Naive thymus-derived CD4-positive, alpha-beta T cell (primary cell): ENCODE measurements at regions of chr4 and their contacts with region 1.

Region 1: GRCh38 chr4:118278473-118279274 is 74.1 kb downstream of the PRSS12 start:
- DNase-seq: peak; percentile 91 to 99 (median 95)
- ATAC-seq: peak; percentile 98
- H3K4me3 ChIP-seq: peak overlapping the region; percentile 80
- H3K4me3 Mint-ChIP-seq: peak overlapping the region; percentile 91 to 98 (median 94)
- H3K27ac ChIP-seq: peak overlapping the region; percentile 94
- H3K27ac Mint-ChIP-seq: peak overlapping the region; percentile 93 to 99 (median 98)
- H3K4me1 ChIP-seq: peaks cover 16 to 20% of the 10 kb centered on the region in 2 donors
- H3K4me1 Mint-ChIP-seq: peaks cover 24 to 58% (median 48%) of the 10 kb centered on the region in 7 donors
- H3K27me3 ChIP-seq: no peaks in the 10 kb centered on the region
- H3K27me3 Mint-ChIP-seq: no peaks in the 10 kb centered on the region

Region 2: GRCh38 chr4:118173956-118174725 is 104.5 kb before region 1 on chr4:
- CTCF ChIA-PET with region 1: no interaction called
- POLR2A ChIA-PET with region 1: no interaction called
- intact Hi-C with region 1: loop called in 1 of 2 experiments (anchors 5 kb)
- DNase-seq: peak in 4 of 9 donors; percentile 14 to 28 (median 18)
- ATAC-seq: no peak
- H3K4me3 ChIP-seq: no peak overlapping the region
- H3K4me3 Mint-ChIP-seq: peak overlapping the region in 1 of 10 donors; percentile 60
- H3K27ac ChIP-seq: no peak overlapping the region
- H3K27ac Mint-ChIP-seq: peak overlapping the region in 2 of 9 donors; percentile 17 to 53
- H3K4me1 ChIP-seq: no peaks in the 10 kb centered on the region
- H3K4me1 Mint-ChIP-seq: peaks cover 0 to 42% (median 5%) of the 10 kb centered on the region in 7 donors
- H3K27me3 ChIP-seq: no peaks in the 10 kb centered on the region
- H3K27me3 Mint-ChIP-seq: peaks cover 4 to 11% (median 8%) of the 10 kb centered on the region in 5 donors

Region 3: DNA sequence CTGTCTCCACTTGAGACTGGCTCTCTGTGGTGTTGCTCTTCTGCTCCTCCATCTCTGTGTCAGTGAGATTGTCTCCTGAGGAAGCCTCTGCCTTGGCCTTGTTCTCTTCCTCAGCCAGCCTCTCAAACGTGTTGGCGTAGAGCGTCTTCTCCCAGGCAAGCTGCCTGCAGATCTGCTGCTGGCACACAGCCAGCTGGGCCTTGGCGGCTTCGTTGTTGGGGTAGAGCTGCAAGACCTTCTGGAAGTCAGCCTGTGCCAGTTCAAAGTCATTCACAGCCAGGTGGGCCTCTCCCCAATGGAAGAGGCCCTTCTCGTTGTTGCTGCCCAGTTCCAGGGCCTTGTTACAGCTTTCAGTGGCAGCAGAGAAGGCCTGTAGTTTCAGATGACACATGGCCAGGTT is 85.3 kb before region 1 on chr4:
- CTCF ChIA-PET with region 1: no interaction called
- POLR2A ChIA-PET with region 1: no interaction called
- intact Hi-C with region 1: no loop called
- DNase-seq: no peak
- ATAC-seq: no peak
- H3K4me3 ChIP-seq: no peak overlapping the region
- H3K4me3 Mint-ChIP-seq: no peak overlapping the region
- H3K27ac ChIP-seq: no peak overlapping the region
- H3K27ac Mint-ChIP-seq: no peak overlapping the region
- H3K4me1 ChIP-seq: no peaks in the 10 kb centered on the region
- H3K4me1 Mint-ChIP-seq: no peaks in the 10 kb centered on the region
- H3K27me3 ChIP-seq: no peaks in the 10 kb centered on the region
- H3K27me3 Mint-ChIP-seq: peaks cover 0 to 7% (median 0%) of the 10 kb centered on the region in 5 donors

Region 4: GRCh38 chr4:118586357-118586790 is 307.7 kb after region 1 on chr4:
- CTCF ChIA-PET with region 1: no interaction called
- POLR2A ChIA-PET with region 1: no interaction called
- intact Hi-C with region 1: loop called (anchors 1 kb)
- DNase-seq: no peak
- ATAC-seq: no peak
- H3K4me3 ChIP-seq: no peak overlapping the region
- H3K4me3 Mint-ChIP-seq: no peak overlapping the region
- H3K27ac ChIP-seq: no peak overlapping the region
- H3K27ac Mint-ChIP-seq: no peak overlapping the region
- H3K4me1 ChIP-seq: peaks cover 4 to 6% of the 10 kb centered on the region in 2 donors
- H3K4me1 Mint-ChIP-seq: peaks cover 6 to 19% (median 17%) of the 10 kb centered on the region in 7 donors
- H3K27me3 ChIP-seq: no peaks in the 10 kb centered on the region
- H3K27me3 Mint-ChIP-seq: peaks cover 2 to 37% (median 16%) of the 10 kb centered on the region in 5 donors

Region 5: DNA sequence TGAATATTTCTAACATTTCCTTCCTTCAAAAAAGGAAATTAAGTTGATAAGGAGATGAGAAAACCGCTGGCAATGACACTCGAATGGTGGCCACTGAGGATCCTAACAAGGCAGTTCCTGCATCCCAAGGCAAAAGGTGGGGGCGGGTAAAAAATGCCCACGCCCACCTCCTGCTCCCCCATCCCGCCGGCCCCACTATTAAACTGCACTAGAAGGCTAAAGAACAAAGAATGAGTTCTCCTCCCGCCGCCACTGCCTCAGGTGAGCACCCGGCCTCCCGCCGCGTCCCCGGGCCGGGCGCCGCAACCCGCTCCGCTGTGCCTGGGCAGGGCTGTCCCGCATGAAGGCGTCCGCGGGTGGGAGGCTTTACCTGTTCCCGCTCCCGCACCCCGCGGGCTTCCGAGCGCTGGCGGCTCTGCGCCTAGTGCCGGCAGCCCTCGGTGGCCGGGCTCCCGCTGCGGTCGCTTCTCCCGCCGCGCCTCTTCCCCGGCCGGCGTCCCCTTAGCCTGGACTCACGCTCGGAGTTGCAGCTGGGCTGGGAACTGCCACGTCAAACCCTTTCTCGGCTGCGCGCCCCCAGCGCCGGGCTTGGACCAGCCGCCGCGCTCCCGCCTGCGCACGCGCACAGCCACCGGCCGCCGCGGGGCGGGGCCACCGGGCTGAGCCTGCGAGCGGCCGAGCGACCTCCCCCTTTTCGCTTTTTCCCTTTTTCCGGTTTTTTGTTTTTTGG is 557.1 kb after region 1 on chr4 and contains the start of gene SEC24D:
- CTCF ChIA-PET with region 1: no interaction called
- POLR2A ChIA-PET with region 1: no interaction called
- intact Hi-C with region 1: loop called (anchors 1 to 2 kb)
- DNase-seq: peak; percentile 71 to 95 (median 80)
- ATAC-seq: peak; percentile 90
- H3K4me3 ChIP-seq: peak within 1 kb of the TSS; percentile 91
- H3K4me3 Mint-ChIP-seq: peak within 1 kb of the TSS; percentile 87 to 100 (median 99)
- H3K27ac ChIP-seq: peak within 1 kb of the TSS; percentile 87
- H3K27ac Mint-ChIP-seq: peak within 1 kb of the TSS; percentile 86 to 100 (median 96)
- H3K4me1 ChIP-seq: peaks cover 0 to 5% of the 10 kb centered on the region in 2 donors
- H3K4me1 Mint-ChIP-seq: peaks cover 15 to 31% (median 20%) of the 10 kb centered on the region in 7 donors
- H3K27me3 ChIP-seq: no peaks in the 10 kb centered on the region
- H3K27me3 Mint-ChIP-seq: peaks cover 0 to 4% (median 0%) of the 10 kb centered on the region in 5 donors
- total RNA-seq, gene SEC24D: 11.5 to 59.2 (median 16.4) TPM

Region 6: DNA sequence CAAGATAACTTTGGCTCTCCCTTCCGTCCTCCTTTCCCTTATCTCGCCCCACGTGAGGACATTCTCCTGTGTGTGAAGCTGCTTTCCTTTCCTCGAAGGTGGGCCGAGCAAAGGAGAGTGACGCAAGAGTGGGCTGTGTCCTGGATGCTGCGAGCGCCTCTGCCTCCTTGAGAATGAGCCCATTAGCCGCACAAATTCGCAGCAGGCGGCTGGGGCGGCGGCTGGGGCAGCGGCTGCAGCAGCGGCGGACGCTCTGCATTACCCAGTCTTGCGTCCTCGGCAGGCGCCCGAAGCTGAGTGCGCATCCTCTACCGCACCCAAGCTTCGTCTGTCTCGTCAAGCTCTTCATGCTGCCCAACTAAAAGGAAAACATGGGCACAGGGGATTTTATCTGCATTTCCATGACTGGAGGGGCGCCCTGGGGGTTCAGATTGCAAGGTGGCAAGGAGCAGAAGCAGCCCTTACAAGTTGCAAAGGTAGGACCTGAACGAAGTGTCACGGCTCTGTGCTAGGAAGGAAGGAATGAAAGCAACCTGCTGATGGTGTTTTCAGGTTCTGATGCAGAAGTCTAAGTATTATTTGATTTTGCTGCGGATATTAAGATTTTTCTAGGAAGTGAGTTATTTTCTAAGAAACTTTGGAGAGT is 610.1 kb after region 1 on chr4 and contains the start of gene SYNPO2:
- CTCF ChIA-PET with region 1: no interaction called
- POLR2A ChIA-PET with region 1: no interaction called
- intact Hi-C with region 1: loop called in 1 of 2 experiments (anchors 1 kb)
- DNase-seq: peak in 6 of 9 donors; percentile 9 to 33 (median 14)
- ATAC-seq: peak; percentile 66
- H3K4me3 ChIP-seq: peak within 1 kb of the TSS; percentile 46
- H3K4me3 Mint-ChIP-seq: peak within 1 kb of the TSS; percentile 61 to 85 (median 78)
- H3K27ac ChIP-seq: no peak within 1 kb of the TSS
- H3K27ac Mint-ChIP-seq: peak within 1 kb of the TSS in 1 of 9 donors; percentile 8
- H3K4me1 ChIP-seq: peaks cover 0 to 5% of the 10 kb centered on the region in 2 donors
- H3K4me1 Mint-ChIP-seq: peaks cover 10 to 21% (median 18%) of the 10 kb centered on the region in 7 donors
- H3K27me3 ChIP-seq: peaks cover 3 to 6% of the 10 kb centered on the region in 2 donors
- H3K27me3 Mint-ChIP-seq: peaks cover 26 to 51% (median 40%) of the 10 kb centered on the region in 5 donors
- total RNA-seq, gene SYNPO2: 0.61 to 1.1 (median 0.93) TPM

Region 7: DNA sequence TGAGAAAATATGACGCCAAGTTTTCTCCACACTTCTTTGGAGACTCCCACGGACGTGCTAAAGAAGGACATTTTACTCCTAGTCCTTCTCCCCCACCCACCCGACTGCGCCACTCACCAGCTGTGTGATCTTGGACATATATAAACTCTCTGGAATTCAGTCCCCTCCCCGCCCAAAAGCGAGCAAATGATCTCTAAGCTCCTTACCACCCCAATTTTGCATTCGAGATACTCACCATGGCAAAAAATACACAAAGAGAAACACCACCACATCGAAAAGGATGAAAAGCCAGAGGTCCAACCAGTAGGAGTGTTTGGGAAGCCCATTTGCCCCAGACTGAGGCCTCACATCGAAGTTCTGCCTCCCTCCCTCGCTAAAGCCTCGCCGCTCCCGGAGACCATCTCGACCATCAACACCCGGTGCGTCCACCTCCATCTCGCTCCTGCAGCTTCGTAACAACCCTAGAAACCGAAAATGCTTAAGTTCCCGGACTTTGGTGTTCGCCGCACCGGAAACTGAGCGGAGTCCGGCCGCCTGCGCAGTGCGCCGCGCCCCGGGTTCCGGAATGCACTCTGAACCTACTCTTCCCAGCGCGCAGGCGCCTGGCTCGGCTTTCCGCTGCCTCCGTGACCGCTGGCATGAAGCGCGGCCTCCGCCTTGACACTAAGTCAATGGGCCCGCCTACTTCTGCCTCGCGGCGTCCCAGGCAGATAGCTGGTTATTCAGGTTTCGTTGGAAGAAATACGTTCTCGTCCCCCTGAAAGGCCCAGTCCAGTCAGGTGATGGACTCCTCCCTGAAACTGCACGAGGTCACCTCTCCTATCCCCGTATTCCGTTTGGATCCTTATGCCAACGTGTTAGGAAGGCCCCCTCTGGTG is 1021.7 kb after region 1 on chr4:
- CTCF ChIA-PET with region 1: no interaction called
- POLR2A ChIA-PET with region 1: no interaction called
- intact Hi-C with region 1: loop called in 1 of 2 experiments (anchors 2 kb)
- DNase-seq: peak; percentile 84 to 94 (median 88)
- ATAC-seq: peak; percentile 97
- H3K4me3 ChIP-seq: peak overlapping the region; percentile 93
- H3K4me3 Mint-ChIP-seq: peak overlapping the region; percentile 92 to 100 (median 96)
- H3K27ac ChIP-seq: peak overlapping the region; percentile 90
- H3K27ac Mint-ChIP-seq: peak overlapping the region; percentile 98 to 100 (median 100)
- H3K4me1 ChIP-seq: peaks cover 5 to 22% of the 10 kb centered on the region in 2 donors
- H3K4me1 Mint-ChIP-seq: peaks cover 16 to 49% (median 43%) of the 10 kb centered on the region in 7 donors
- H3K27me3 ChIP-seq: no peaks in the 10 kb centered on the region
- H3K27me3 Mint-ChIP-seq: peaks cover 0 to 5% (median 0%) of the 10 kb centered on the region in 5 donors